GM12878 (cell line): ENCODE measurements at regions of chr9 and their contacts with region 1.

Region 1: DNA sequence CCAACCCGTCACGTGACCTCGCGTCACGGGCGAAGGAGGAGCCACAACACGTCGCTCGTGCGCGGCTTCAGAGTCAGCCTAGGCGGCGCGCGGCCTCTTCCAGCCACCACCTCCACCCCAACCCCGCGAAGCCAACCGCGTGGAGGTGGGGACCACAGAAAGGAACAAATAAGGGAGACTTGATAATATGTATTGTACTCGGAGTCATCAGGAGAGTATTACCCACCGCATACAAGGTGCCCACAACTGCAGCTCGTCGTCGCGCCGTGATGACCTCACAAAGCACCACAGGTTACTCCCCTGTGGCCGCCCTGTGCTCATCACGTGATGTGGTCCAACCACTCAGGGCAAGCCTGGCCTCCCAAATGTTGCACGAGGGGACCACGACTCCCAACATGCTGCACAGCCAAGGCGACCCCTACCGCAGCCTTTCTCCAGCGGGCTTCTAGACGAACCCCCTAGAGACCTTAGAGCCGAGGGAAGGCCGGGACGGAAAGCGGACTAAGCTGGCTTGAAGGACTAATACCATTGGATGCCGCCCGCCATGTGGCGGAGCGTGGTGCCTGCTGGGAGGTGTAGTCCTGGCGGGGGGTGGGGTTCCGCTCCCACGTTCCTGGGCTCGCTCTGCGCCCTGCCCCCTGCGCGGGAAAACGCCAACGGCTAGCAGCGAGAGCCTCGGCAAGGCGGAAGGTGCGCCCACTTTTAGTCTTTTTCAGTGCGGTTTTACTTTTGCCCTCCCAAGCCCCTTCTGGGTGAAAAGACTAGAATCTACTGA is 423 bp upstream of the UBAP2 start:
- DNase-seq: peak; percentile 95
- ATAC-seq: peak; percentile 86
- H3K4me3 ChIP-seq: peak overlapping the region; percentile 85
- H3K27ac ChIP-seq: peak overlapping the region; percentile 96
- H3K4me1 ChIP-seq: peaks cover 9% of the 10 kb centered on the region
- H3K27me3 ChIP-seq: no peaks in the 10 kb centered on the region
- CTCF ChIP-seq: no peak
- EP300 ChIP-seq: peak in 1 of 2 experiments; percentile 14; a peak in 1 of 4 replicates
- POLR2A ChIP-seq: peak; percentile 62
- RAD21 ChIP-seq: no peak

Region 2: GRCh38 chr9:34119713-34120112 is 70.6 kb after region 1 on chr9:
- CTCF ChIA-PET with region 1: no interaction called
- POLR2A ChIA-PET with region 1: interaction called, 10 read pairs
- RAD21 ChIA-PET with region 1: no interaction called
- SMC1A ChIA-PET with region 1: no interaction called
- in situ Hi-C with region 1: no loop called
- intact Hi-C with region 1: no loop called
- DNase-seq: no peak
- ATAC-seq: no peak
- H3K4me3 ChIP-seq: no peak overlapping the region
- H3K27ac ChIP-seq: no peak overlapping the region
- H3K4me1 ChIP-seq: peaks cover 9% of the 10 kb centered on the region
- H3K27me3 ChIP-seq: no peaks in the 10 kb centered on the region
- CTCF ChIP-seq: no peak
- EP300 ChIP-seq: no peak
- POLR2A ChIP-seq: no peak
- RAD21 ChIP-seq: no peak